Activated CD4-positive, alpha-beta memory T cell treated with anti-CD3 and anti-CD28 coated beads for 36 hours (primary cell): ENCODE measurements at regions of chr7 and their contacts with region 1.

Region 1: GRCh38 chr7:98841179-98841997 is 28.4 kb downstream of the TMEM130 start:
- DNase-seq: peak; percentile 75
- H3K4me3 Mint-ChIP-seq: no peak overlapping the region
- H3K27ac Mint-ChIP-seq: no peak overlapping the region
- H3K4me1 Mint-ChIP-seq: peaks cover 2% of the 10 kb centered on the region
- H3K27me3 Mint-ChIP-seq: peaks cover 4% of the 10 kb centered on the region

Region 2: GRCh38 chr7:98420966-98421612 is 420.3 kb before region 1 on chr7:
- CTCF ChIA-PET with region 1: interaction called, 12 read pairs
- POLR2A ChIA-PET with region 1: no interaction called
- intact Hi-C with region 1: no loop called
- DNase-seq: peak; percentile 71
- H3K4me3 Mint-ChIP-seq: no peak overlapping the region
- H3K27ac Mint-ChIP-seq: no peak overlapping the region
- H3K4me1 Mint-ChIP-seq: peaks cover 7% of the 10 kb centered on the region
- H3K27me3 Mint-ChIP-seq: peaks cover 5% of the 10 kb centered on the region

Region 3: DNA sequence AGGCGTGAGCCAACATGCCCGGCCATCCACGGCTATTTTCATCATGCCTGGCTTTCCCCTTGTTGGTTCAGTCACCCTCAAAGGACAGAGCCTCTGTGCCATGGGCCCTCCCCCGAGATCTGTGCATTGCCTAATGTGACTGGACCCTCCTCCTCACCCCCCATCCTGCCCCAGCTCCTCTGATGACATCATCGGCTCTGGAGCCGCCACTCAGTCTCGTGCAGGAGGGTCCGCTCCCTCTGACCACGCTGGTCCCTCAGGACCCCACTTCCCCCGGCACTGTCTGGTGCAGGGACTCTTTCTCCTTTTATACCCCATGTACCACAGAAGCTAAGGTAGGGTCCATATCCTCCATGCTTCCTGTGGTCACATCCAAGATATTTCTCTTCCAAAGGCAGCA is 407.3 kb before region 1 on chr7:
- CTCF ChIA-PET with region 1: interaction called, 34 read pairs
- POLR2A ChIA-PET with region 1: no interaction called
- intact Hi-C with region 1: loop called (anchors 1 kb)
- DNase-seq: no peak
- H3K4me3 Mint-ChIP-seq: no peak overlapping the region
- H3K27ac Mint-ChIP-seq: no peak overlapping the region
- H3K4me1 Mint-ChIP-seq: peaks cover 3% of the 10 kb centered on the region
- H3K27me3 Mint-ChIP-seq: no peaks in the 10 kb centered on the region

Region 4: GRCh38 chr7:98802088-98802780 is 39.2 kb before region 1 on chr7:
- CTCF ChIA-PET with region 1: no interaction called
- POLR2A ChIA-PET with region 1: no interaction called
- intact Hi-C with region 1: no loop called
- DNase-seq: peak; percentile 57
- H3K4me3 Mint-ChIP-seq: no peak overlapping the region
- H3K27ac Mint-ChIP-seq: no peak overlapping the region
- H3K4me1 Mint-ChIP-seq: no peaks in the 10 kb centered on the region
- H3K27me3 Mint-ChIP-seq: peaks cover 2% of the 10 kb centered on the region

Region 5: GRCh38 chr7:99014113-99014985 is 173.0 kb after region 1 on chr7:
- CTCF ChIA-PET with region 1: no interaction called
- POLR2A ChIA-PET with region 1: no interaction called
- intact Hi-C with region 1: no loop called
- DNase-seq: no peak
- H3K4me3 Mint-ChIP-seq: no peak overlapping the region
- H3K27ac Mint-ChIP-seq: no peak overlapping the region
- H3K4me1 Mint-ChIP-seq: peaks cover 7% of the 10 kb centered on the region
- H3K27me3 Mint-ChIP-seq: no peaks in the 10 kb centered on the region

Region 6: DNA sequence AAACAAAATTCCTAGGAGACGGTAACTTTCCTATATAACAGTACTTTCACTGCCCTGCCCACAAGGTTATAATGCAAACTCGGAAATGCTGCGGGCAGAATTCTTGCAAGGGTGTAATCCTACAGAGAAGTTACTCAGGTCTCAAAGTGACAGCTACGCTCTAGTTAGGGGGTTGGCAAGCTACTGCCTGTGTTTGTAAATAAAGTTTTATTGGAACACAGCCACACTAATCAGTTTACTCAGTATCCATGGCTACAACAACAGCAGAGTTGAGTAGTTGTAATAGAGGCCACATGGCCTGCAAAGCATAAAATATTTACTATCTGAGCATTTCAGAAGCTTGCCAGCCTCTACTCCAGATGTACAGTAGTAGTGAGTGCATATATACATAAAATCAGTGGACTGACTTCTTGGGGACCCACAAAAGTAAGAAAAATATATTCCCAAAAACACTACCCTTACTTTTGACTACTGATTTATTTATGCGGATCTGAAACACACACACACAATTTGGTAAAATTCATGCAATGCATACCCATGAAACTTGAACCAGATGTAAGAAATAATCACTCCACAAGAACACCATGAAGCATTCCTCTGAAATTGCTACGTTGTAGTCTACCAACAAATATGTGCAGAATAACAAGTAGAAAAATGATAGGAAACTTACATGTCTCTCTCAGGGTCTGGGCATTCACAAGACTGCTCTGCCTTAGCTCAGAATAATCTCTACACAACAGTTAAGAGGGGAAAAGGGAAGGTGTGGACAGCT is 249.6 kb after region 1 on chr7:
- CTCF ChIA-PET with region 1: no interaction called
- POLR2A ChIA-PET with region 1: no interaction called
- intact Hi-C with region 1: no loop called
- DNase-seq: no peak
- H3K4me3 Mint-ChIP-seq: no peak overlapping the region
- H3K27ac Mint-ChIP-seq: no peak overlapping the region
- H3K4me1 Mint-ChIP-seq: peaks cover 13% of the 10 kb centered on the region
- H3K27me3 Mint-ChIP-seq: no peaks in the 10 kb centered on the region